Breast epithelium (tissue), 4 donors: ENCODE measurements at regions of chr20 and their contacts with region 1.

Region 1: DNA sequence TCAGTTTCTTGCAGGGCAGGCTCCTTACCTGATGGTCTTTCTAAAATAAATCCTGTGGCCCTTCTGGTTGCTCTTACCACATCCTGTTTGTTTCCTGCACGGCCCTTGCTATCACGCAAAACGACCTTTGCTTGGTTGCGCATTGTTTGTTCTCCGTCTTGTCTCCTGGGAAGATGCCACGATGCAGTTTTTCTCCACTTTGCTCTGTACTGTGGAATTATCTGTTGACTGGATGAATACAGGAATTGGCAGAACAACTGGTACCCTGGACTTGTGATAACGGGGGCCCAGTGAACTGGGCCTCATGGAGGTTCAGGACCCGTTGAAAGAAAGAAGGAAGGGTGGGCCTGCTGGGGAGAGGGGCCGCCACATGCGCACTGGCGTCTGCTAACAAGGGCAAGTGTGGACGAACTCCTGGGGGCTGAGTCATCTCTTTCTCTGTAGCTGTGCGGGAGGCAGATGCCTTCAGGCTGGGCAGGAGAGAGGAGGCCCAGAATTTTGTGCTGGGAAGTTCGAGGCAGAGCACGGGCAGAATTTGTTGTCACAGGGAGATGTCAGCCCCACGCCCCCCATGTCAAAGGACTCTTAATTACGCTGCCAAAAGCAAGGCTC is 139.9 kb downstream of the BMP7 start:
- DNase-seq: no peak
- H3K4me3 ChIP-seq: no peak overlapping the region
- H3K27ac ChIP-seq: no peak overlapping the region
- H3K4me1 ChIP-seq: no peaks in the 10 kb centered on the region
- H3K27me3 ChIP-seq: no peaks in the 10 kb centered on the region
- CTCF ChIP-seq: no peak
- POLR2A ChIP-seq: no peak

Region 2: GRCh38 chr20:57148263-57148662 is 21.7 kb after region 1 on chr20:
- intact Hi-C with region 1: loop called (anchors 1 kb)
- DNase-seq: no peak
- H3K4me3 ChIP-seq: no peak overlapping the region
- H3K27ac ChIP-seq: no peak overlapping the region
- H3K4me1 ChIP-seq: no peaks in the 10 kb centered on the region
- H3K27me3 ChIP-seq: no peaks in the 10 kb centered on the region
- CTCF ChIP-seq: no peak
- POLR2A ChIP-seq: no peak

Region 3: GRCh38 chr20:57351042-57351783 is 224.6 kb after region 1 on chr20 and contains the start of gene RAE1:
- intact Hi-C with region 1: no loop called
- DNase-seq: peak; percentile 85 to 86
- H3K4me3 ChIP-seq: peak within 1 kb of the TSS; percentile 73 to 94 (median 75)
- H3K27ac ChIP-seq: peak within 1 kb of the TSS; percentile 88
- H3K4me1 ChIP-seq: peaks cover 0 to 5% of the 10 kb centered on the region in 2 donors
- H3K27me3 ChIP-seq: no peaks in the 10 kb centered on the region
- CTCF ChIP-seq: no peak
- POLR2A ChIP-seq: no peak
- total RNA-seq, gene RAE1: 13.8 to 26.9 (median 17.4) TPM